GM10248 (cell line): ENCODE measurements at regions of chr1 and their contacts with region 1.

Region 1: GRCh38 chr1:42846257-42847110 is at the start of gene ZNF691:
- DNase-seq: peak; percentile 96
- CTCF ChIP-seq: peak; percentile 42

Region 2: GRCh38 chr1:42766741-42767509 is 79.6 kb before region 1 on chr1 and contains the starts of genes C1orf50 and P3H1:
- CTCF ChIA-PET with region 1: interaction called, 12 read pairs
- POLR2A ChIA-PET with region 1: interaction called, 5 read pairs
- DNase-seq: peak; percentile 98
- CTCF ChIP-seq: no peak

Region 3: GRCh38 chr1:42822800-42823392 is 23.6 kb before region 1 on chr1:
- CTCF ChIA-PET with region 1: interaction called, 26 read pairs
- POLR2A ChIA-PET with region 1: no interaction called
- DNase-seq: no peak
- CTCF ChIP-seq: no peak